Vagina (tissue), 2 donors: ENCODE measurements at regions of chr16 and their contacts with region 1.

Region 1: DNA sequence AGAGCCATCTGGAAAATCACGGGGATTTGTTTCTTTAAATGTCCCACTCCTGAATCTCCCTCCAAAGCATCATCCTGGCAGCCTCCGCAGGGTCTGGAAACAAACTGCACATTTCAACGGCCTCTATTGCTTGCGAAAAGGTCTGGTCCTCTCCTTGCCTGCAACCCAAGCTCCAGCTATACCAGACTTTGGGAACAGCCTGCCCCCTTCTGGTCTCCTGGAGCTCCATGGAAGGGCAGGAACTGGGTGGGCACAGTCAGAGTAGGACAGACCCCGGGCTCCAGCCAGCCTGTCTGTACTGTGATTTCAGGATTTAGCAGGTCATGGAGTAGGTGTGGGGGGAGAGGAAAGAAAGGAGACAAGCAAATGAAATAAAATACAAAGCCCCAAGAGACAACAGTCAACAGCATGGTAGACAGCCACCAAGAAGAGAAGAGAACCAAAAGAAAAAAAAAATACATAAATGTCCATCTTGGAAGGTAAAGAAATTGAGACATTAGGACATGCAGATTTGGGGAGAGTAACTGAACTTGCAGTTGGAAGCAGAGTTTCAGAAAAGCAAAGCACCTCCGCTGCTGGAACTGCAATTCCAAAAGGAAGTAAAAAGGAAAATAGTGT is 2.7 kb downstream of the XYLT1 start:
- DNase-seq: peak in 1 of 2 donors; percentile 89
- H3K4me3 ChIP-seq: peak overlapping the region; percentile 78 to 91
- H3K27ac ChIP-seq: peak overlapping the region; percentile 79
- H3K4me1 ChIP-seq: peaks cover 30% of the 10 kb centered on the region
- H3K27me3 ChIP-seq: no peaks in the 10 kb centered on the region
- CTCF ChIP-seq: peak; percentile 52 to 78 (median 61)
- POLR2A ChIP-seq: no peak

Region 2: GRCh38 chr16:17173281-17173680 is 294.8 kb before region 1 on chr16:
- intact Hi-C with region 1: no loop called
- DNase-seq: no peak
- H3K4me3 ChIP-seq: no peak overlapping the region
- H3K27ac ChIP-seq: no peak overlapping the region
- H3K4me1 ChIP-seq: peaks cover 5% of the 10 kb centered on the region
- H3K27me3 ChIP-seq: no peaks in the 10 kb centered on the region
- CTCF ChIP-seq: no peak
- POLR2A ChIP-seq: no peak

Region 3: DNA sequence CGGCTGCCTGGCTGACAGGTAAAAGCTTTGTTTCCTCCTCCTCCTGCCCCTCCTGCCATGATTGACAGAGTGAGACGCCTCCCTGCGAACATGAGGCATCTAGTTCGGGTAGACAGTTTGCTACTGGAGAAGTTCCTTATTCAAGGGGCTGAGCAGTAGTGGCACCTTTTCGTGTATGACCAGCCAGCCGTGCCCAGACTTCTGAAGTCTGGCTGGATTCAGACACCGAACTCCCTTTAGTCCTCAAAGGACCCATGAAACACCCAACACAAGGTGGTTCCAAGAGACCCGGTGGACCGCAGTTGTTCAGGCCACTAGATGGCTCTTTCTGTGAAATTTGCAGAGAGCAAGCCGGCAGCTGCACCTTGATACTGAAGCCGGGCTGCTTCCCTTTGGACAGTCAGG is 190.1 kb before region 1 on chr16:
- intact Hi-C with region 1: loop called (anchors 10 kb)
- DNase-seq: no peak
- H3K4me3 ChIP-seq: no peak overlapping the region
- H3K27ac ChIP-seq: no peak overlapping the region
- H3K4me1 ChIP-seq: peaks cover 6% of the 10 kb centered on the region
- H3K27me3 ChIP-seq: no peaks in the 10 kb centered on the region
- CTCF ChIP-seq: no peak
- POLR2A ChIP-seq: no peak

Region 4: GRCh38 chr16:17397499-17397891 is 70.5 kb before region 1 on chr16:
- intact Hi-C with region 1: loop called (anchors 5 kb)
- DNase-seq: no peak
- H3K4me3 ChIP-seq: no peak overlapping the region
- H3K27ac ChIP-seq: peak overlapping the region; percentile 49
- H3K4me1 ChIP-seq: peaks cover 50% of the 10 kb centered on the region
- H3K27me3 ChIP-seq: no peaks in the 10 kb centered on the region
- CTCF ChIP-seq: no peak
- POLR2A ChIP-seq: no peak

Region 5: DNA sequence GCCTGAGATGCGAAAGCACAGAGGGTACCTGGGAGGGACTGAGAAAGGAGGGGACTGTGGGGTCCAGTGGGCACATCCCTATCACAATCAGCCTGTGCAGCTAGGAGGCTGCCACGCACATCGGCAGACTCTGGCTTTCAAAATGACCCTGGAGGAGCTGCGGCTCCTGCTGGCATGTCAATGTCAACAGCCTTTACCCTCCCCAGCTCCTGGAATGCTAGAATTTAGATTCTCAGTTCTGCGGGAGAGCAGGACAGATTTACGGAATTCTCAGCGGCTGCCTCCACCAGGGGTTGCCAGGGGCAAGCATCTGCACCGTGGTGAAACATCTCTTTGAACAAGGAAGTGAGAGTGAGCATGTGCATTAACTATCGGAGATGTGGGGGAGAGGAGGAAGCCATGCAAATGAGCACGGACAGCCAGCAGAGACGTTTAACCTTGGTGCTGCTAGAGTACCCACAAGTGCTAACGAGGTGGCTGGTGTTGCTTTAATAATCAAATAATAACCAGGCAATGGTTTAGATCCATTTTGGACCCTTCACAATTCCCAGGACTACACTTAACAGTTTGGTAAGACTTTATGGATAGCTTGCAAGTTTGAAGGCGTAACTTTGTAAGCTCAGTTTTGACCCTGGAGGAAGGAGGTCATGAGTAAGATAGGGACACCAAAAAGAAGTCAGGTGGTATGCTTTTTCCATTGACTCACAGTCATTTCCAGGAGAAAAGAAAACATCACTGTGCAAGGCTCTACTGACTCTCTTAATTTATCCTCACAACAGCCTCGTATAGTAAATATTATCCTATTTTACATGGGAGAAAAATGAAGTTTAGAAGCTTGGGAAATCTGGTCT is 51.3 kb before region 1 on chr16:
- intact Hi-C with region 1: no loop called
- DNase-seq: no peak
- H3K4me3 ChIP-seq: no peak overlapping the region
- H3K27ac ChIP-seq: peak overlapping the region; percentile 66
- H3K4me1 ChIP-seq: peaks cover 26% of the 10 kb centered on the region
- H3K27me3 ChIP-seq: no peaks in the 10 kb centered on the region
- CTCF ChIP-seq: no peak
- POLR2A ChIP-seq: no peak